PC-3 (cell line): ENCODE measurements at regions of chr7 and their contacts with region 1.

Region 1: DNA sequence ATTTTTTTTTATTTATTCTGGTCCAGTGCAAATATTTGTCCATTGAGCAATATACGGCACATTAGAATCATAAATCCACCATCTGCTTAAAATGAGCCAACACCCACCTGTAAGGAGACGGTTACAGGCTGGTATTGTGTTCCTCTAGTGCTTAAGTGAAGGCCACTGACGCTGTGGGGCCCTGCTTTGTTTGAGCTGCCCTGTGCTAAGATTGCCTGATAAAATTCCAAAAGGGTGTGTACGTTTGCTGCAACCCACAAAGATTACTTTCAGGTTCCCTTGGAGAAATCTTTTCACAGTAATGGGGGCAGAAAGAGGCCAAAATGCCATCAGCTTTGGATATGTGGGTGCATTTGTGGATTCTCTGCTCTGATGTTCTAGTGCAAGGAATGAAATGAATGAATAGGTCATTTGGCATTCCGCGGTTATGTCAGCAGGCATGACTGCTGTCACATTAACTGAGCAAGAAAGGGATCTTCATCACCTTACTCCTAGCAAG is 34.4 kb downstream of the AGR3 start:
- DNase-seq: peak; percentile 95
- ATAC-seq: peak; percentile 99
- H3K4me3 ChIP-seq: peak overlapping the region; percentile 61
- H3K27ac ChIP-seq: peak overlapping the region; percentile 97
- H3K4me1 ChIP-seq: peaks cover 38% of the 10 kb centered on the region
- H3K27me3 ChIP-seq: no peaks in the 10 kb centered on the region
- CTCF ChIP-seq: no peak

Region 2: DNA sequence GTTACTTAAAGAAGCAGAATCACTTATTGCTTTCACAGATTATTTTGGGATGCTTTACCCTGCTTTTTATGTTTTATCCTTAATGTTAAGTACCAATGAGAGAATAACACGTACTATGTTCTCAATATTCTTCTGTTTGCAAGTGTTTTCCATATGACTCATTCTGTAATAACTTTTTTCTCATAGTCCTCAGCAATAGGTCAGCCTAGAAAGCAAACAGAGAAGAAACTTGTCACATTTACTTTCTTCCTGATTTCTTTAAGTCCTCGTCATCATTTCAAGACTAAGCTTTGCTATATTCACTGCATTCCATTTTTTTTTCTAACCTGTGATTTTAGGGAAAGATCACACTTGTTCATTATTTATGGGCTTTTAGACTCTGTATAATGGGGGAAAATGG is 35.9 kb before region 1 on chr7:
- CTCF ChIA-PET with region 1: interaction called, 3 read pairs
- POLR2A ChIA-PET with region 1: no interaction called
- intact Hi-C with region 1: loop called (anchors 1 kb)
- DNase-seq: peak; percentile 82
- ATAC-seq: peak; percentile 42
- H3K4me3 ChIP-seq: peak overlapping the region; percentile 34
- H3K27ac ChIP-seq: peak overlapping the region; percentile 96
- H3K4me1 ChIP-seq: peaks cover 56% of the 10 kb centered on the region
- H3K27me3 ChIP-seq: no peaks in the 10 kb centered on the region
- CTCF ChIP-seq: no peak

Region 3: GRCh38 chr7:16874066-16874465 is 26.7 kb after region 1 on chr7:
- CTCF ChIA-PET with region 1: no interaction called
- POLR2A ChIA-PET with region 1: no interaction called
- intact Hi-C with region 1: no loop called
- DNase-seq: no peak
- ATAC-seq: no peak
- H3K4me3 ChIP-seq: no peak overlapping the region
- H3K27ac ChIP-seq: no peak overlapping the region
- H3K4me1 ChIP-seq: no peaks in the 10 kb centered on the region
- H3K27me3 ChIP-seq: no peaks in the 10 kb centered on the region
- CTCF ChIP-seq: no peak